Motor neuron (in vitro differentiated cells): ENCODE measurements at regions of chr18 and their contacts with region 1.

Region 1: DNA sequence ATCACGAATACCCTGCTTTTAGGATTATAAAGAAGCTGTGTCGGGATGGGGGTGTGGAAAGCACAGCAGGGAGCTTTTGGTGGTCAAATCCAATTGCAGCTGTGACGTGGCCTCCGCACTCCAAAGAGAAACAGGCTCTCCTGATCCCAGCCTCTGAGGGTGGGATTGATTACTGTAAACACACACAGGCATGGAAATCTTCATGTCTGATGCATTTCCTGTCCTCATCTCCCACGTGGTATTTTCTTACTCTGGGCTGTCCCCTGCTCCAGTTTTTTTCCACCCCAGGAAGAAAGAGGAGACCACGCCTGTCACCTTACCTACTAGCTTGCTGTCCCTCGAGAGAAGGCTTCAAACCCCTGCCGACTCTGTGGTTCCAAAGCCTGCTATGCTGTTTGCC is 22.7 kb downstream of the RNF152 start:
- ATAC-seq: peak in 3 of 8 experiments; percentile 17 to 94 (median 56)
- H3K4me3 ChIP-seq: no peak overlapping the region
- H3K27ac ChIP-seq: no peak overlapping the region
- H3K4me1 ChIP-seq: peaks cover 0 to 10% of the 10 kb centered on the region in 2 donors

Region 2: GRCh38 chr18:61972389-61973264 is 102.5 kb after region 1 on chr18:
- in situ Hi-C with region 1: loop called in 1 of 9 experiments (anchors 25 kb)
- ATAC-seq: no peak
- H3K4me3 ChIP-seq: no peak overlapping the region
- H3K27ac ChIP-seq: no peak overlapping the region
- H3K4me1 ChIP-seq: no peaks in the 10 kb centered on the region